T-cell (primary cell): ENCODE measurements at regions of chr2 and their contacts with region 1.

Region 1: DNA sequence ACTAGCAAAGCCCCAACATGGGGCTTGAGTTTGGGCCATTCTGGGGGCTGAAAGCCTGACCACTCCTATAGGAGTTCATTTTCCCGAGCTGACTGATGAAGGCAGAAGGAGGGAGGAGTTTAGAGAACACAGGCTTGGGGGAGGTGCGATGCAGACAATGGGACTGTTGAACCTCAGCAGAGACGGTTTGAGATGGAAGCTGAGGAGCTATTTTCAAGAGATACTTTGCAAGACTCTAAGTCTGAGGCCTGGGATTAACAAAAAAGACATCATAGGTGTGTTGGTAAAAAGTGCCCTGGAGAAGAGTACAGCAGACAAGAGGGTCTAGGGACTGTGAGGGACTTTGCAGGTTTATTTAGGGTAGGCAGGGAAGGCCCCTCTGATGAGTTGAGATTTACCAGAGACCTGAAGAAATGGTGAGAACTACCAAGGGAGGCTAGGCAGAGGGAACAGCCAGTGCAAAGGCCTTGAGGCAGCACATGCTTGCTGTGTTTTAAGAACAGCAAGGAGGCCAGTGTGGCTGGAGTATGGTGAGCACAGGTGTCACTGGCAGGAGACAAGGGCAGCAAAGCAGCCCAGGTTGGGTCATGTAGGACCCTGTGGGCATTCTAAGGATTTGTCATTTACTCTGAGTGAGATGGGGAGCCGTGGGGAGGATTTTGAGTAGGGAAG is 31.7 kb downstream of the PCBP1 start:
- DNase-seq: no peak
- ATAC-seq: no peak
- H3K4me3 ChIP-seq: no peak overlapping the region
- H3K4me3 Mint-ChIP-seq: no peak overlapping the region
- H3K27ac ChIP-seq: no peak overlapping the region
- H3K27ac Mint-ChIP-seq: peak overlapping the region; percentile 74 to 86
- H3K4me1 ChIP-seq: peaks cover 19 to 47% of the 10 kb centered on the region in 2 experiments
- H3K4me1 Mint-ChIP-seq: peaks cover 52 to 62% (median 57%) of the 10 kb centered on the region in 3 donors
- H3K27me3 ChIP-seq: no peaks in the 10 kb centered on the region
- H3K27me3 Mint-ChIP-seq: no peaks in the 10 kb centered on the region

Region 2: GRCh38 chr2:70132244-70133126 is 13.6 kb after region 1 on chr2:
- CTCF ChIA-PET with region 1: interaction called in 1 of 2 experiments, 15 read pairs
- POLR2A ChIA-PET with region 1: interaction called, 10 to 18 read pairs
- DNase-seq: peak in 27 of 35 experiments; percentile 23 to 73 (median 42)
- ATAC-seq: peak; percentile 57 to 75 (median 74)
- H3K4me3 ChIP-seq: peak overlapping the region; percentile 42 to 64
- H3K4me3 Mint-ChIP-seq: peak overlapping the region; percentile 82 to 89 (median 83)
- H3K27ac ChIP-seq: peak overlapping the region; percentile 89
- H3K27ac Mint-ChIP-seq: peak overlapping the region; percentile 99 to 100
- H3K4me1 ChIP-seq: peaks cover 57 to 87% of the 10 kb centered on the region in 2 experiments
- H3K4me1 Mint-ChIP-seq: peaks cover 85 to 88% (median 85%) of the 10 kb centered on the region in 3 donors
- H3K27me3 ChIP-seq: no peaks in the 10 kb centered on the region
- H3K27me3 Mint-ChIP-seq: no peaks in the 10 kb centered on the region